ENCODE measurements at regions of chr21 and their contacts with region 1.

Region 1: DNA sequence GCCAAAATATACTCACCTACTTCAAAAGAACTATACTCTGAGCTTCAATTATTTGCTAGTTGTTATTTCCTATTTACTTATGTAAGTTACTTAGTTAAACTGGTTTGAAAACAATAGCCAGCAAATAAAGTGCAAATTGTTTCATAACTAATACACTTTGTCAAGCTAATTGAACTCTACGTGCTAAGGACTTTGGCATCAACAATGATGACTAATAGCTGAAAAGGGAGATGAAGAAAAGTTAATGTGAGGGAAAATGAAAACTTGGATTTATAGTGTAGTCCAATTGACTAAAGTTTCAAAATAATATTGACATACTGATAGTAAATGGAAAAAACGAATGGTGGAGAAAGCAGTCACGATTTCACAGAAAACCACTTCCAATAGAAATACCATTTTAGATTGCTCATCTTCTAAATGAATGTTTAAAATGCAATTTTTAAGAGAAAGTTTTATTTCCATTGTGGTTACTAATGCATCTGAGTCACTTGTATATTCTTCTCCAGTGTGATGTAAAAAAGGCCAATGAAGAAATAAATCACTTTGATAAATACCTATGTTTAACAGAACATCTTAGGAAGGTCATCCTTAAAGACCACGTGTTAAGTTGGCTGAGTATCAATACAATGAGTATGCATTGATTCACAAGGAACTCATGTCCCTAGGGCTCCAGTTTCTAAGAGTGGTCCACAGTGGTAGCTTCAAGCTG is 455.2 kb downstream of the LTN1 start:
- DNase-seq: no peak
- ATAC-seq: no peak
- H3K4me3 ChIP-seq: no peak overlapping the region
- H3K27ac ChIP-seq: no peak overlapping the region
- H3K4me1 ChIP-seq: peaks cover 0 to 3% of the 10 kb centered on the region in 2 donors
- H3K27me3 ChIP-seq: no peaks in the 10 kb centered on the region

Region 2: GRCh38 chr21:28375708-28376385 is 161.7 kb before region 1 on chr21:
- intact Hi-C with region 1: loop called in 1 of 2 experiments (anchors 5 kb)
- DNase-seq: no peak
- ATAC-seq: no peak
- H3K4me3 ChIP-seq: no peak overlapping the region
- H3K27ac ChIP-seq: peak overlapping the region; percentile 16 to 79
- H3K4me1 ChIP-seq: peaks cover 0 to 4% of the 10 kb centered on the region in 2 donors
- H3K27me3 ChIP-seq: no peaks in the 10 kb centered on the region

Measured in aorta (tissue), 5 donors.